CD8-positive, alpha-beta memory T cell (primary cell): ENCODE measurements at regions of chr20 and their contacts with region 1.

Region 1: GRCh38 chr20:5766085-5766764 is 16.0 kb downstream of the SHLD1 start:
- DNase-seq: no peak
- H3K4me3 ChIP-seq: no peak overlapping the region
- H3K4me3 Mint-ChIP-seq: no peak overlapping the region
- H3K27ac ChIP-seq: no peak overlapping the region
- H3K27ac Mint-ChIP-seq: peak overlapping the region in 3 of 8 donors; percentile 36 to 81 (median 61)
- H3K4me1 ChIP-seq: no peaks in the 10 kb centered on the region
- H3K4me1 Mint-ChIP-seq: peaks cover 25 to 42% (median 31%) of the 10 kb centered on the region in 3 donors
- H3K27me3 ChIP-seq: no peaks in the 10 kb centered on the region
- H3K27me3 Mint-ChIP-seq: no peaks in the 10 kb centered on the region

Region 2: GRCh38 chr20:5714261-5715041 is 51.8 kb before region 1 on chr20:
- CTCF ChIA-PET with region 1: no interaction called
- POLR2A ChIA-PET with region 1: interaction called, 10 read pairs
- DNase-seq: peak; percentile 55 to 95 (median 92)
- H3K4me3 ChIP-seq: peak overlapping the region; percentile 1
- H3K4me3 Mint-ChIP-seq: peak overlapping the region; percentile 34 to 81 (median 70)
- H3K27ac ChIP-seq: peak overlapping the region; percentile 65
- H3K27ac Mint-ChIP-seq: peak overlapping the region; percentile 84 to 99 (median 97)
- H3K4me1 ChIP-seq: peaks cover 30% of the 10 kb centered on the region
- H3K4me1 Mint-ChIP-seq: peaks cover 30 to 49% (median 32%) of the 10 kb centered on the region in 3 donors
- H3K27me3 ChIP-seq: no peaks in the 10 kb centered on the region
- H3K27me3 Mint-ChIP-seq: no peaks in the 10 kb centered on the region